ENCODE measurements at regions of chr6 and their contacts with region 1.

Region 1: GRCh38 chr6:39166189-39166911 is 51.4 kb upstream of the SAYSD1 start:
- DNase-seq: peak; percentile 92
- ATAC-seq: peak; percentile 92
- H3K4me3 ChIP-seq: no peak overlapping the region
- H3K27ac ChIP-seq: no peak overlapping the region
- H3K4me1 ChIP-seq: no peaks in the 10 kb centered on the region
- H3K27me3 ChIP-seq: no peaks in the 10 kb centered on the region
- CTCF ChIP-seq: peak; percentile 91

Region 2: GRCh38 chr6:39218873-39219536 is 52.7 kb after region 1 on chr6:
- intact Hi-C with region 1: no loop called
- DNase-seq: no peak
- ATAC-seq: peak; percentile 13
- H3K4me3 ChIP-seq: no peak overlapping the region
- H3K27ac ChIP-seq: no peak overlapping the region
- H3K4me1 ChIP-seq: peaks cover 70% of the 10 kb centered on the region
- H3K27me3 ChIP-seq: no peaks in the 10 kb centered on the region
- CTCF ChIP-seq: no peak

Region 3: GRCh38 chr6:39302669-39303424 is 136.5 kb after region 1 on chr6:
- intact Hi-C with region 1: loop called (anchors 5 kb)
- DNase-seq: peak; percentile 92
- ATAC-seq: peak; percentile 96
- H3K4me3 ChIP-seq: no peak overlapping the region
- H3K27ac ChIP-seq: no peak overlapping the region
- H3K4me1 ChIP-seq: peaks cover 10% of the 10 kb centered on the region
- H3K27me3 ChIP-seq: no peaks in the 10 kb centered on the region
- CTCF ChIP-seq: peak; percentile 91

Region 4: GRCh38 chr6:39543095-39543494 is 376.7 kb after region 1 on chr6:
- intact Hi-C with region 1: no loop called
- DNase-seq: no peak
- ATAC-seq: peak; percentile 74
- H3K4me3 ChIP-seq: no peak overlapping the region
- H3K27ac ChIP-seq: no peak overlapping the region
- H3K4me1 ChIP-seq: peaks cover 4% of the 10 kb centered on the region
- H3K27me3 ChIP-seq: no peaks in the 10 kb centered on the region
- CTCF ChIP-seq: no peak